Naive thymus-derived CD8-positive, alpha-beta T cell (primary cell): ENCODE measurements at regions of chr5 and their contacts with region 1.

Region 1: GRCh38 chr5:140174465-140175366 is at the start of gene CYSTM1:
- DNase-seq: peak; percentile 91 to 98 (median 97)
- ATAC-seq: peak; percentile 87 to 91
- H3K4me3 Mint-ChIP-seq: peak within 1 kb of the TSS; percentile 86 to 97 (median 94)
- H3K27ac Mint-ChIP-seq: peak within 1 kb of the TSS; percentile 82 to 99 (median 98)
- H3K4me1 Mint-ChIP-seq: peaks cover 13 to 25% (median 15%) of the 10 kb centered on the region in 4 donors
- H3K27me3 Mint-ChIP-seq: peaks cover 0 to 5% (median 3%) of the 10 kb centered on the region in 5 donors
- polyA plus RNA-seq, gene CYSTM1: 5.1 to 6.5 (median 6.3) TPM

Region 2: DNA sequence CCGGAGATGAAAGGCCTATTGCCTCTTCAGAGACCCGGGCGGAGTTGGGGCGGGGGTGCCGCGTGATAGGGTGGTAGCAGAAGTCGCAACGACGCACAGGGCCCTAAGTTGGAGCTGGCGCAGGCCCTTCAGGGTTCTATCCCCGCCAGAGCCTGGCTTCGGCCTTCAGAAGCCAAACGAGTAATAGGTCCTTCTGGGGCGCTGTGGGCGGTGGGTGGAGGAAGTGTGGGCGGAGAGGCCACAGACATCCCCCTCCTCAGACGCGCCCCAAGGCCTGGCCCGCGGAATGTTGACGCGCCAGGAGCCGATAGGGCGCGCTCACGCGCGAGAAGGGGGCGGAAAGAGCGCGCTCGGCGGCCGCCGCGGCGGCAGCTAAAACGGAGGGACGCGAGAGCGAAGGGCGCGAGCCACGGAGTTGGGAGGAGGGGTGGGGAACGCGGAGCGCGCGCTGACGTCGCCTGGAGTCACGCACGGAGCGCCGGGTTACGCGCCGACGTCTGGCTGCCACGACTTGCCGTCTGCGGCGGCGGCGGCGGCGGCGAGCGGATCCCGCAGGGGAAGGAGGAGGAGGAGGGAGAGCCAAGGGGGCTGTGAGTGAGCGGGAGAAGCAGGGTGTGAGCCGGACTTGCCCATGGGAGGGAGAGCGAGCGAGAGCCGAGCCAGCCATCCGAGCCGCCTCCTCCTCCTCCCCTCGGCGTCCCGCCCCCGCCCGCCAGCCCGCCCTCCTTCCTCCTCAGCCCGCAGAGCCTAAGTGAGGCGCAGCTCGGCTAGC is 67.2 kb before region 1 on chr5:
- POLR2A ChIA-PET with region 1: interaction called, 11 read pairs
- DNase-seq: peak; percentile 90 to 96 (median 93)
- ATAC-seq: peak; percentile 77 to 85
- H3K4me3 Mint-ChIP-seq: peak overlapping the region; percentile 90 to 98 (median 96)
- H3K27ac Mint-ChIP-seq: peak overlapping the region; percentile 97 to 100 (median 99)
- H3K4me1 Mint-ChIP-seq: peaks cover 22 to 54% (median 47%) of the 10 kb centered on the region in 4 donors
- H3K27me3 Mint-ChIP-seq: peaks cover 0 to 19% (median 2%) of the 10 kb centered on the region in 5 donors